ENCODE measurements at regions of chr4 and their contacts with region 1.

Region 1: GRCh38 chr4:40550948-40551462 is 78.7 kb downstream of the RBM47 start:
- DNase-seq: no peak
- ATAC-seq: peak; percentile 78
- H3K4me3 Mint-ChIP-seq: peak overlapping the region; percentile 81
- H3K27ac Mint-ChIP-seq: peak overlapping the region; percentile 83
- H3K4me1 Mint-ChIP-seq: peaks cover 42% of the 10 kb centered on the region
- H3K27me3 Mint-ChIP-seq: no peaks in the 10 kb centered on the region
- CTCF ChIP-seq: no peak

Region 2: GRCh38 chr4:40149960-40150385 is 401.0 kb before region 1 on chr4:
- CTCF ChIA-PET with region 1: no interaction called
- POLR2A ChIA-PET with region 1: no interaction called
- intact Hi-C with region 1: loop called (anchors 1 kb)
- DNase-seq: no peak
- ATAC-seq: peak; percentile 97
- H3K4me3 Mint-ChIP-seq: no peak overlapping the region
- H3K27ac Mint-ChIP-seq: peak overlapping the region; percentile 59
- H3K4me1 Mint-ChIP-seq: peaks cover 38% of the 10 kb centered on the region
- H3K27me3 Mint-ChIP-seq: no peaks in the 10 kb centered on the region
- CTCF ChIP-seq: peak; percentile 57

Region 3: GRCh38 chr4:40441430-40441829 is 109.6 kb before region 1 on chr4:
- CTCF ChIA-PET with region 1: no interaction called
- POLR2A ChIA-PET with region 1: no interaction called
- intact Hi-C with region 1: loop called (anchors 5 kb)
- DNase-seq: no peak
- ATAC-seq: no peak
- H3K4me3 Mint-ChIP-seq: no peak overlapping the region
- H3K27ac Mint-ChIP-seq: no peak overlapping the region
- H3K4me1 Mint-ChIP-seq: no peaks in the 10 kb centered on the region
- H3K27me3 Mint-ChIP-seq: no peaks in the 10 kb centered on the region
- CTCF ChIP-seq: no peak

Region 4: GRCh38 chr4:40515398-40516293 is 35.4 kb before region 1 on chr4:
- CTCF ChIA-PET with region 1: no interaction called
- POLR2A ChIA-PET with region 1: interaction called, 10 read pairs
- intact Hi-C with region 1: loop called (anchors 5 kb)
- DNase-seq: no peak
- ATAC-seq: peak; percentile 79
- H3K4me3 Mint-ChIP-seq: peak overlapping the region; percentile 67
- H3K27ac Mint-ChIP-seq: peak overlapping the region; percentile 48
- H3K4me1 Mint-ChIP-seq: peaks cover 44% of the 10 kb centered on the region
- H3K27me3 Mint-ChIP-seq: no peaks in the 10 kb centered on the region
- CTCF ChIP-seq: no peak

Region 5: GRCh38 chr4:40621592-40622512 is 70.8 kb after region 1 on chr4:
- CTCF ChIA-PET with region 1: no interaction called
- POLR2A ChIA-PET with region 1: no interaction called
- intact Hi-C with region 1: loop called (anchors 2 kb)
- DNase-seq: peak; percentile 18
- ATAC-seq: peak; percentile 93
- H3K4me3 Mint-ChIP-seq: peak overlapping the region; percentile 39
- H3K27ac Mint-ChIP-seq: peak overlapping the region; percentile 54
- H3K4me1 Mint-ChIP-seq: peaks cover 23% of the 10 kb centered on the region
- H3K27me3 Mint-ChIP-seq: no peaks in the 10 kb centered on the region
- CTCF ChIP-seq: no peak

Measured in activated B cell treated with CpG ODN at 0.5 μM for 24 hours (primary cell).